ENCODE measurements at regions of chr7 and their contacts with region 1.

Region 1: GRCh38 chr7:31192986-31193385 is 140.9 kb downstream of the ADCYAP1R1 start:
- DNase-seq: peak; percentile 61 to 66
- ATAC-seq: peak; percentile 100
- H3K4me3 ChIP-seq: no peak overlapping the region
- H3K27ac ChIP-seq: no peak overlapping the region
- H3K4me1 ChIP-seq: no peaks in the 10 kb centered on the region
- CTCF ChIP-seq: peak; percentile 76
- EP300 ChIP-seq: no peak
- POLR2A ChIP-seq: no peak
- RAD21 ChIP-seq: peak; percentile 85 to 86

Region 2: GRCh38 chr7:31175672-31176071 is 17.3 kb before region 1 on chr7:
- CTCF ChIA-PET with region 1: interaction called, 18 read pairs
- POLR2A ChIA-PET with region 1: no interaction called
- DNase-seq: peak; percentile 9 to 11
- ATAC-seq: peak; percentile 62 to 77; a peak in 4 of 6 replicates
- H3K4me3 ChIP-seq: no peak overlapping the region
- H3K27ac ChIP-seq: no peak overlapping the region
- H3K4me1 ChIP-seq: no peaks in the 10 kb centered on the region
- CTCF ChIP-seq: 0 out of 3 replicates have a peak, but pooled peaks have one; percentile 18
- EP300 ChIP-seq: no peak
- POLR2A ChIP-seq: no peak
- RAD21 ChIP-seq: no peak

Region 3: DNA sequence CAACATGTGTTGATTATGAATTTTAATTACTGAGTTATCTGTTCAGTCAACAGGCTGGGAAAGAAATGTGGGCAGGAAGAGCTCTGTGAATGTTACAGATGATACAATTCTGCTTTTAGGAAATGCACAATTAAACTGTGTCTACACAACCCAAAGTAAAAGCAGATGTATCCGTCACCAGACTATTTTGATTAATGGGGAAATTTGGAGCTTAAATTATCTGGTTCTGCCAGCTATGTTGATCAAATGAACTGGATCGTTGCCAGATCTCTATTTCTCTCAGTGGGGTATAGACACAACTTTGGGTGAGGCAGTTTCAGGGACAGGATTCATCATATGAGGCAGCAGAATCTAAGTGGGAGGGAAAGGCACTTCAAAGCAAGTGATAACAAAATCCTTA is 11.1 kb after region 1 on chr7:
- CTCF ChIA-PET with region 1: interaction called, 11 read pairs
- POLR2A ChIA-PET with region 1: no interaction called
- DNase-seq: no peak
- ATAC-seq: no peak
- H3K4me3 ChIP-seq: no peak overlapping the region
- H3K27ac ChIP-seq: no peak overlapping the region
- H3K4me1 ChIP-seq: no peaks in the 10 kb centered on the region
- CTCF ChIP-seq: no peak
- EP300 ChIP-seq: no peak
- POLR2A ChIP-seq: no peak
- RAD21 ChIP-seq: no peak

Region 4: DNA sequence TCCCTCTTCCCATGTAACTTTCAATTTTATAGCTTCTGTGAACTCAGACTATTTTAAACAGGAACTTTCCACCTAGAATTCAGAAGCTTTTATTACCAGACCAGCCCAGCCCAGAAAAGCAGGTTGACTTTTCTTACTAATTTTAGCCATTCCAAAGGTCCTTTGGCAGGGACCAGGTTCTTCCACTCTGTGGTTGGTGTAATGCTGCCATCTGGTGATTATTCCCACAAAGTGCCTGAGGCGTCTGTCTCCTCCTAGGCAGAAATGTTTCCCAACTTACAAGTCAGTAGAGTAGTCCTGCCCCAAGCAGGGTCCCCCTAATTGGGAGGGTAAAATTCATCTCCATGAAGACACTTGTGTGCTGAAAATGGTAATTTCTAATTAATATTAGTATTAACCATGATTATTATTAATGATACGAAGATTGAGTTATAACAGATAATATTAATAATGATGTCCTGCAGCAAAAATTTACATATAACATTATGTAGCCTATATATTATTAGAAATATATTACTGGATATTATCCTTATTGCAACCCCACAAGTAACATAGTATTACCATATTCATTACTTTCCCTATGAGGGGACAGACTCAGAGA is 441.0 kb after region 1 on chr7:
- CTCF ChIA-PET with region 1: interaction called, 54 read pairs
- POLR2A ChIA-PET with region 1: no interaction called
- DNase-seq: peak; percentile 47 to 69
- ATAC-seq: peak; percentile 96
- H3K4me3 ChIP-seq: no peak overlapping the region
- H3K27ac ChIP-seq: no peak overlapping the region
- H3K4me1 ChIP-seq: no peaks in the 10 kb centered on the region
- CTCF ChIP-seq: peak; percentile 76
- EP300 ChIP-seq: no peak
- POLR2A ChIP-seq: no peak
- RAD21 ChIP-seq: peak; percentile 87 to 92

Region 5: DNA sequence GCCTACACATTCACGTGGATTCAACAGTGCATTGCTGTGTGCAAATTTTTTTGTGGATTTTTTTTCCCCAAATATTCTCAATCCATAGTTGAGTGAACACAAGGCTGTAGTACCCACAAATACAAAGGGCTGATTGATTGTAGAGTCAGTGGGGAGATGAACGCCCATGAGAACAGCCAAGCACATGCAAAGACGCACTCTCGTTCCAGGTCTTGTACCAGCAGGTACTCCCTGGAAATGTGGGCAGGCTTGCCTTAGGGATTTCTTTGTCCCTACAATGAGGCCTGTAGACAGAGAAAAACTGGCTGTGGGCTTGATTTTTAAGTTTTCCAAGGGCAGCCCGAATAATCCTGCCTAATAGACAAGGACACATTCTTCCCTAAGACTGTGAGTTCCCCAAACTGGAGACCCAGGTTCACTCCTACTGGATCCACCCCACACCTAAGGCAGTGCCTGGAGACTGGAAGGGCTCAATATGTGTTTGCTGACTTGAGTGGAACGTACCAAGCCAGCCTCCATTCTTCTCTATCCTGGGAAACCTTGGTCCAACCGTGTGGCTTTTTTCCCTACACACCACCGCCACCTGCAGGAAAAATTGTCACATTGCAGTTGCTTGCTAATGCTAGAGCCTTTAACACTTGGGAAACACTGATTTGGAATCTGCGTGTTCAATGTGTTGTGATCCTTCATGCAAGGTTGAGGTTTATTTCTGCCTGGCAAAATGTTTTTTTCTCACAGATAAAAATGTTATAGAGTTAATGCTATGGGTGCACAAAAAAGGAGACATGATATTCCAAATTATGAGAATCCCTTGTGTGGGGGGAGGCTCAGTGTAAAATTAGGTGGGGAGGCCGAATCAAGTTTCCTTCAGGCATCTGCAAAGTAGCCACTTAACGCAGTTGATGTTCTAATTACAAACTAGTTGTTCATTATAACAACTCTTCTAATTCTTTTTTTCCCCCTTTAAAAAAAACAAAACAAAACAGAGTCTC is 543.3 kb after region 1 on chr7:
- CTCF ChIA-PET with region 1: interaction called, 15 read pairs
- POLR2A ChIA-PET with region 1: no interaction called
- DNase-seq: peak; percentile 45 to 64
- ATAC-seq: peak; percentile 80 to 95
- H3K4me3 ChIP-seq: no peak overlapping the region
- H3K27ac ChIP-seq: no peak overlapping the region
- H3K4me1 ChIP-seq: no peaks in the 10 kb centered on the region
- CTCF ChIP-seq: peak; percentile 78
- EP300 ChIP-seq: no peak
- POLR2A ChIP-seq: no peak
- RAD21 ChIP-seq: peak; percentile 81 to 93

Region 6: GRCh38 chr7:32436146-32436928 is 1243.4 kb after region 1 on chr7:
- CTCF ChIA-PET with region 1: no interaction called
- POLR2A ChIA-PET with region 1: no interaction called
- DNase-seq: no peak
- ATAC-seq: no peak
- H3K4me3 ChIP-seq: no peak overlapping the region
- H3K27ac ChIP-seq: no peak overlapping the region
- H3K4me1 ChIP-seq: no peaks in the 10 kb centered on the region
- CTCF ChIP-seq: no peak
- EP300 ChIP-seq: no peak
- POLR2A ChIP-seq: no peak
- RAD21 ChIP-seq: no peak